ENCODE measurements at regions of chr7 and their contacts with region 1.

Region 1: DNA sequence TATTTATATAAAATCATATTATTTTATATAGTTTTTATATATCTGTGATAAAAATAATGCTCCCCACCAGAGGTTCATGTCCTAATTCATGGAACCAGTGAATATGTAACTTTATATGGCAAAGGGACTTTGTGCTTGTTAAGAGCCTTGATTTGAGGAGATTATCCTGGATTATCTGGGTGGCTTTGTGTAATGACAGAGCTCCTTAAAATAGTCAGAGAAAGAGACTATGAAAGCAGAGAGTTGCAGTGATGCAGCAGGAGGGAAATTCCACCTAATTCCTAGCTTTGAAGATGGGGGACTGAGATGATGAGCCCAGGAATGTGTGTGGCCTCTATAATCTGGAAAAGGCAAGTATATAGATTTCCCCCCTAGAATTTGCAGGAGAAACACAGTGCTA is 1034.2 kb upstream of the C7orf33 start:
- DNase-seq: no peak
- ATAC-seq: no peak
- H3K4me3 ChIP-seq: no peak overlapping the region
- H3K27ac ChIP-seq: no peak overlapping the region
- H3K4me1 ChIP-seq: no peaks in the 10 kb centered on the region
- H3K27me3 ChIP-seq: no peaks in the 10 kb centered on the region
- CTCF ChIP-seq: no peak
- POLR2A ChIP-seq: no peak

Region 2: GRCh38 chr7:147492606-147493005 is 63.7 kb before region 1 on chr7:
- intact Hi-C with region 1: loop called in 1 of 10 experiments (anchors 10 kb)
- DNase-seq: no peak
- ATAC-seq: no peak
- H3K4me3 ChIP-seq: no peak overlapping the region
- H3K27ac ChIP-seq: no peak overlapping the region
- H3K4me1 ChIP-seq: no peaks in the 10 kb centered on the region
- H3K27me3 ChIP-seq: no peaks in the 10 kb centered on the region
- CTCF ChIP-seq: no peak
- POLR2A ChIP-seq: no peak

Region 3: DNA sequence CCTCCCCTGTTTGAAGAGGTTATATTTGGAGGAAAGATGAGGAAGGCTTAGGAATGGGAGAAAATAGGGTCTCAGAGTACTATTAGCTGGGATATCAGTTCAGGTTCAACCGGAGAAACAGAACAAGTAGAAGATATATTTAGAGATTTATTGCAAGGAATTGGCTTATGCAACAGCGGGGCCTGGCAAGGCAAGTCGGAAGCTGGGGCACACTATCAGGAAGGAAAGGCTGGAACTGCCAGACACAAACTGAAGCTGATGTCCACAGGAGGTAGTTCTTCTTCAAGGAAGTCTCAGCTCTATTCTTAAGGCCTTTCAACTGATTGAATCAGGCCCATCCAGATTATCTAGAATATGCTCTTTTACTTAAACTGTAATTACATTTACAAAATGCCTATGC is 94.7 kb after region 1 on chr7:
- intact Hi-C with region 1: no loop called
- DNase-seq: no peak
- ATAC-seq: no peak
- H3K4me3 ChIP-seq: no peak overlapping the region
- H3K27ac ChIP-seq: no peak overlapping the region
- H3K4me1 ChIP-seq: no peaks in the 10 kb centered on the region
- H3K27me3 ChIP-seq: no peaks in the 10 kb centered on the region
- CTCF ChIP-seq: no peak
- POLR2A ChIP-seq: no peak

Measured in heart left ventricle (tissue), 16 donors.